ENCODE measurements at regions of chr1 and their contacts with region 1.

Region 1: DNA sequence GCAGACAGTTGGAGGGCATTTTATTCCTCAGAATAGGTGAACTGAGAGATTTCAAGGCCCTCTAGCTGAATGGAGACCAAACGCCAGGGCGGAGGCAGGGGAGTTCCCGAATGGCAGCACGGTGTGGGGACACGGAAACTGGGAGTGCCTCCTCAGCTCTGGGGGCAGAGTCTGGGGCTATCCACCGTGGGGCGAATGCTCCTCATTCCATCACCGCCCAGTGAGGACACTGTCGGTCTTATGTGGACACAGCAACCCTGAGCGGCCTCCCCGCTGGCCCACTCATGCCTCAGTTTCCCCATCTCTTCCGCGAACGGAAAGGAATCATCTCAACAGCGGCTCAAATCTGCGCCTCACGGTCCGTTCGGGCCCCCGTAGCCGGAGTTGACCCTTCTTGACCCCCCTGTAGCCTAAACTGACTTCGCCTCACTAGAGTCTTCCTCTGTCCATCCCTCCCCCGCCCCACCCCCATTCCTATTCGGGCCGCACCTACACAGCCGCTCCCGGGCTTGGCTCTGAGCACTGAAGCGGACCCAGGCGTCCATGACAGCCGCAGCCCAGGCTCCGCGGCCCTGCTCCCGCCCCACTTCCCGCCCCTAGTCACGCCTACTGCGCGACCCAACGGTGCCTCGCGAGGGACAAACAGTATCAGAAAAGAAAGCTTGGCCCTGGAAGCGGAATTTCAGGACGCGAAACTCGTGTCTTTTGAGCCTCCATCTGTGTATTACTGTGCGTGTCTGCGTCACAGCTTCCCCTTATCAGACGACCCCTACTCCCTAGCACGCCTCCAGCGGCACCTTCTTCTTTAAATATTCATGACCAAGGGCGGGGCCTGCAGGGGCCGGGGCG is at the start of gene PEX11B:
- DNase-seq: peak; percentile 91
- ATAC-seq: peak; percentile 94
- H3K4me3 ChIP-seq: peak within 1 kb of the TSS; percentile 96
- H3K27ac ChIP-seq: peak within 1 kb of the TSS; percentile 85
- H3K4me1 ChIP-seq: peaks cover 8% of the 10 kb centered on the region
- H3K27me3 ChIP-seq: no peaks in the 10 kb centered on the region
- CTCF ChIP-seq: no peak
- POLR2A ChIP-seq: peak; percentile 49; the same call in 1 of the 2 replicates
- RAD21 ChIP-seq: no peak
- total RNA-seq, gene PEX11B: 15.4 and 19.7 TPM in 2 replicates

Region 2: DNA sequence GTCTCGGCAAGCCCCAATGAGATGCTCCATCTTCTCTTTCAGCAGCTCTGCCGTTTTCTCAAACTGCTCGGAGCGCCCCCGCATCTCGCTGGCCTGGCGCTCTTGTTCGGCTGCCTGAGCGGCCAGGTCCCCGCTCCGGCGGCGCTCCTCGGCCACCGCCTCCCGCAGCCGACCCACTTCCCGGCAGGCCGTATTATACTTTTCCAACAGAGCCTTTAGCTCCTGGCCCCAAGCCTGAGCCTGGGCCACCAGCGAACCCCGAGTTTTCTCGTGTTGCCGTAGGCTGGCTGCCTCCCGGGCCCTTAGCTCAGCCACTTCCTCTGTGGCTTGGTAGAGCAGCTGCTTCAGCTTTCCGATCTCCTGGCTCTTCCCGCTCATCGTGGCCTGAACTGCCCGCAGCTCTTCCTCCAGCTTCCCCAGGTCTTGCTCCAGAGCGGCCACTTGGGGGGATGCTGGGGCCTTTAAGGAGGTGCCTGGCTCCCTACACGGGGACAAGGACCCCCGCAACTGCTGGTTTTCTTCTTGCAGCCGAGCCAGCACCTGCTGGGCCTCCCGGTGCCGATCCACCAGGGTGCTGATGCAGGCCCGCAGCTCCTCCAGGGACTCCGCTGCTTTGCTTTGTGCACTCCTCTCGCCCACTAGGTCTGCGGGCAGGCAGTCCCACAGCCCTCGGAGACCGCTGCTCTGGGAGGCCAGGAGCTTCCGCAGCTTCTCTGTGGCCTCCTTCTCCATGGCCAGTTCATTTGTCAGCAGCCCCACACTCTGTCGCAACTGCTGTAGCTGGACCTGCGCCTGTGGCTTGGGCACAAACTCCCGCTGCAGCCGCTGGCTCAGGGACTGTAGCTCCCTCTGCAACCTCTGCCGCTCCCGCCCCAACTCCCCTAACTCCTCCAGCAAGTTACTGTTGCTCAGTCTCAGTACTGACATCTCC is 46.1 kb before region 1 on chr1:
- CTCF ChIA-PET with region 1: no interaction called
- POLR2A ChIA-PET with region 1: no interaction called
- dilution Hi-C with region 1: no loop called
- in situ Hi-C with region 1: loop called (anchors 5 kb)
- intact Hi-C with region 1: no loop called
- DNase-seq: peak; percentile 46
- ATAC-seq: peak; percentile 86
- H3K4me3 ChIP-seq: peak overlapping the region; percentile 32
- H3K27ac ChIP-seq: peak overlapping the region; percentile 33
- H3K4me1 ChIP-seq: peaks cover 8% of the 10 kb centered on the region
- H3K27me3 ChIP-seq: no peaks in the 10 kb centered on the region; the same call in 1 of the 2 replicates
- CTCF ChIP-seq: no peak
- POLR2A ChIP-seq: no peak
- RAD21 ChIP-seq: no peak

Region 3: GRCh38 chr1:145901318-145902021 is 16.9 kb before region 1 on chr1:
- CTCF ChIA-PET with region 1: no interaction called
- POLR2A ChIA-PET with region 1: no interaction called
- dilution Hi-C with region 1: no loop called
- in situ Hi-C with region 1: no loop called
- intact Hi-C with region 1: no loop called
- DNase-seq: no peak
- ATAC-seq: no peak
- H3K4me3 ChIP-seq: no peak overlapping the region
- H3K27ac ChIP-seq: no peak overlapping the region
- H3K4me1 ChIP-seq: no peaks in the 10 kb centered on the region
- H3K27me3 ChIP-seq: no peaks in the 10 kb centered on the region
- CTCF ChIP-seq: no peak
- POLR2A ChIP-seq: no peak
- RAD21 ChIP-seq: no peak

Region 4: DNA sequence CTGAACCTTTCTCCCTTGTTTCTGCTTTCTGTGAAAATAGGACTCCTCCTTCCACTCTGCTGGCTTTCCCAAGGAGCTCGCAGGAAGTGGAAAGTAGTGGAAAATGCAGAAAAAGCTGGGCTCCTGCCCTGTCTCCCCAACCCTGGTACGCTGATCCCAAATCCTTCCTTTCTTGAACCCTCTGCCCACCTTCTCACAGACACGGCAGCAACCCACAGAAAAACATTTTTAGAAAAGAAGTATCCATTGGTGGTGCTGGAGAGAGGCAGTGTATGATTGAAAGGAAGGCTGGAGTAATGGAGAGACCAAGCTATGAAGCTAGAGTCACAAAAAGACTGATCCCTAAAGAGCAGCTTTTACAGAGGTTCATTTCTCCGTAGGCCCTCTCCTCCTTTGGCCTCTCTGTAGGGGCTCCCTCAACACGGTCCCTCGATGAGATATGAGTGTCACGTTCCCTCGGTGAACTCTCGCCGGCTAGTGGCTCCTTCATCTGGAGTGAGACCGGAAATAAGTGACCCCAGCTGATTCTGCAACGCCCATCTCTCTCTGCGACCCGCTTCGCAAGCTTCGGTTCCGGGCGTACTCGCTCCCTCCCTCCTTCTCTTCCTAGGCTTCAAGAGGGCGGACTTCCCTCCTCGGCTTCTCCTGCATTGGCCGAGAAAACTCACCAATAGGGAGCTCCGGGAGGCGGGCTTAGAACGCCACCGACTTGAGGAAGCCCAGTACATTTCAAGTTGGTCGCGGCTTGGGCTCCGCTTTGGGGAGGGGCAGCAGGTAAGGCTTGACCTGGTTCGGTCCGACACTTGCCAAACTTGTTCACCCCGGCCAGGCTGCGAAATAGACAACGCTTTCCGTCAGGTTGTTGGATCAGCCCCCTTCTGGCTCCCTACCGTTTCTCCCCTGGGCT is 45.9 kb after region 1 on chr1 and contains the starts of genes ANKRD34A and POLR3GL:
- CTCF ChIA-PET with region 1: no interaction called
- POLR2A ChIA-PET with region 1: interaction called, 4 read pairs
- dilution Hi-C with region 1: no loop called
- in situ Hi-C with region 1: loop called (anchors 5 kb)
- intact Hi-C with region 1: no loop called
- DNase-seq: peak; percentile 89
- ATAC-seq: peak; percentile 86
- H3K4me3 ChIP-seq: peak within 1 kb of the TSS; percentile 61
- H3K27ac ChIP-seq: peak within 1 kb of the TSS; percentile 76
- H3K4me1 ChIP-seq: peaks cover 28% of the 10 kb centered on the region
- H3K27me3 ChIP-seq: no peaks in the 10 kb centered on the region
- CTCF ChIP-seq: no peak
- POLR2A ChIP-seq: no peak; the same call in 1 of the 2 replicates
- RAD21 ChIP-seq: no peak
- total RNA-seq, gene ANKRD34A: 0.56 and 0.90 TPM in 2 replicates
- total RNA-seq, gene POLR3GL: 7.9 and 10.3 TPM in 2 replicates